ENCODE measurements at regions of chr16 and their contacts with region 1.

Region 1: GRCh38 chr16:88737298-88738150 is 31.2 kb downstream of the CTU2 start:
- DNase-seq: peak; percentile 80
- H3K4me3 Mint-ChIP-seq: no peak overlapping the region
- H3K27ac Mint-ChIP-seq: no peak overlapping the region
- H3K4me1 Mint-ChIP-seq: peaks cover 2% of the 10 kb centered on the region
- H3K27me3 Mint-ChIP-seq: no peaks in the 10 kb centered on the region

Region 2: DNA sequence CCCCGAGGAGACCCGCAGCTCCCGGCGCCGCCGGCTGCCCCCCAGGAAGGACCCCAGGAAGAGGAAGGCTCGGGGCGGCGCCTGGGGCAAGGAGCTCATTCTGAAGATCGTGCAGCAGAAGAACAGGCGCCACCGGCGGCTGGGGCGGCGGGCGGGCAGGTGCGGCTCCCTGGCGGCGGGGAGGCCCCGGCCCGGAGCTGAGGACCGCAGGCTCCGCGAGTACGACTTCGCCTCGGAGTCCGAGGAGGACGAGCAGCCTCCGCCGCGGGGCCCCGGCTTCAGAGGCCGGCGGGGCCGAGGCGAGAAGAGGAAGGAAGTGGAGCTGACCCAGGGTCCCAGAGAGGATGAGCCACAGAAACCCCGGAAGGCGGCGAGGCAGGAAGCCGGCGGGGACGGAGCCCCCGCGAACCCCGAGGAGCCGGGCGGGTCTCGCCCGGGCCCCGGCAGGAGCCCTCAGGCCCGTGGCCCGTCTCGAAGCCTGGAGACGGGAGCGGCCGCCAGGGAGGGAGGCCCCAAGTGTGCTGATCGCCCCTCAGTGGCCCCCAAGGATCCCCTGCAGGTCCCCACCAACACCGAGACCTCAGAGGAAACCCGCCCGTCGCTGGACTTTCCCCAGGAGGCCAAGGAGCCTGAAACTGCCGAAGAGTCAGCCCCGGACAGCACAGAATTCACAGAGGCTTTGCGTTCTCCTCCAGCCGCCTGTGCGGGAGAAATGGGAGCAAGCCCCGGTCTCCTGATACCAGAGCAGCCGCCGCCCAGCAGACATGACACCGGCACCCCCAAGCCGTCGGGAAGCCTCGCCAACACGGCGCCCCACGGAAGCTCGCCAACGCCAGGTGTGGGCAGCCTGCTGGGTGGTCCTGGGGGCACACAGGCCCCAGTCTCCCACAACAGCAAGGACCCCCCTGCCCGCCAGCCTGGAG is 306.7 kb before region 1 on chr16:
- CTCF ChIA-PET with region 1: no interaction called
- DNase-seq: peak; percentile 61
- H3K4me3 Mint-ChIP-seq: peak overlapping the region; percentile 26
- H3K27ac Mint-ChIP-seq: no peak overlapping the region
- H3K4me1 Mint-ChIP-seq: peaks cover 5% of the 10 kb centered on the region
- H3K27me3 Mint-ChIP-seq: peaks cover 34% of the 10 kb centered on the region

Region 3: DNA sequence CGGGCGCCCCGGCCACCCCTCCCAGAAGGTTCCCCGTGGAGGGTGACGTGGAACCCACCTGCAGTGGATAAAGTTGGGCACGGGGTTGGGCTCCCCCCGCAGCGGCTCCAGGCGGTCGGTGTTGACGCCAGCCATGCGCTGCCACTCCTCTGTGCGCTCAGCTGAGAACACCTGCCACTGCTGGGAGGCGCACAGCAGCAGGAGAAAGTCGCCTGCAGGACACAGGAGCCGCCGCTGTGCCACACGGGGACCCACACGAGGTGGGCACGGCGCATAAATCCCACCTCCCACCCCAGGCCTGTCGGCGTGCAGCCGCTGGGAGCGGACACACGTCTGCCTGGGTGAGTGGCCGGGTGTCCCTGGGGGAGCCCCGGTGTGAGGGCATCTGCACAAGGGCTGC is 10.5 kb before region 1 on chr16:
- CTCF ChIA-PET with region 1: no interaction called
- DNase-seq: no peak
- H3K4me3 Mint-ChIP-seq: no peak overlapping the region
- H3K27ac Mint-ChIP-seq: no peak overlapping the region
- H3K4me1 Mint-ChIP-seq: peaks cover 7% of the 10 kb centered on the region
- H3K27me3 Mint-ChIP-seq: no peaks in the 10 kb centered on the region

Region 4: DNA sequence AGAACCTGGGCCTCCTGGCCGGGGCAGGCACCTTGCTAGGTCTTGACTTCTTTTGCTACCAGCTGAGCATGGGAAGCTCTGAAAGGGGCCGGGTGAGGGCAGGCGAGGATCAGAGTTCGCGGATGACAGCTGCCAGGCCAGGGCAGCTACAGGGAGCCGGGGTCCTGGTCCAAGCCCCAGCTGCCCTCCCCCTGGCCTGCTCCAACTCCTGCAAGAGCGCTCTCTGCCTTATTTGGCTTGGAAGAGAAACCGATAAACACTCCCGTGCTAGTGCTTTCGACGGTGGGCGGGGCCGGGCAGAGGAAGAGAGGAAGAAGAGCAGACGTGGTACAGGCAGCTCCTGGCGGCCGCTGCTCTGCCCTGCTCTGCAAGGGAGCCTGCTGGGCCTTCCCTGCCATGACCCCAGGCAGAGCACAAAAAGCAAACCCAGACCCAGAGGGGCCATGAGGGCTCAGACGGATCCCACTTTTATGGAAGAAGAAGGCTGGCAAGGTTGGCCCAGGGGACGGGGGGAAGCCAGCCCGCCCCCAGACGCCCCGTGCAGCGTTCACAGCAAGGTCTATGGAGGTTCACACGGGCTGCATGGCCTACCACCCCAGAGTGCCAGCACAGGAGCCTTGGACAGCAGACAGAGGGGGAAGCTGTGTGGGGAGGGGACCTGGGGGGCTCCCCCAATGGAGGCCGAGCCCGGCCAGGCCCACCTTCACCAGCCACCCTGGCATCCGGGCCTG is 21.9 kb after region 1 on chr16:
- CTCF ChIA-PET with region 1: interaction called, 14 read pairs
- DNase-seq: peak; percentile 68
- H3K4me3 Mint-ChIP-seq: no peak overlapping the region
- H3K27ac Mint-ChIP-seq: peak overlapping the region; percentile 85
- H3K4me1 Mint-ChIP-seq: peaks cover 29% of the 10 kb centered on the region
- H3K27me3 Mint-ChIP-seq: no peaks in the 10 kb centered on the region

Region 5: GRCh38 chr16:88799569-88800276 is 62.2 kb after region 1 on chr16:
- CTCF ChIA-PET with region 1: interaction called, 11 read pairs
- DNase-seq: peak; percentile 73
- H3K4me3 Mint-ChIP-seq: peak overlapping the region; percentile 6
- H3K27ac Mint-ChIP-seq: peak overlapping the region; percentile 62
- H3K4me1 Mint-ChIP-seq: peaks cover 51% of the 10 kb centered on the region
- H3K27me3 Mint-ChIP-seq: no peaks in the 10 kb centered on the region